ENCODE measurements at regions of chr17 and their contacts with region 1.

Region 1: GRCh38 chr17:8189711-8190477 is at the start of gene BORCS6:
- DNase-seq: peak; percentile 93 to 97 (median 95)
- H3K4me3 ChIP-seq: peak within 1 kb of the TSS; percentile 92
- H3K4me3 Mint-ChIP-seq: peak within 1 kb of the TSS in 1 of 7 donors; percentile 15
- H3K27ac ChIP-seq: peak within 1 kb of the TSS; percentile 81
- H3K27ac Mint-ChIP-seq: peak within 1 kb of the TSS; percentile 46 to 95 (median 88)
- H3K4me1 ChIP-seq: peaks cover 39% of the 10 kb centered on the region
- H3K4me1 Mint-ChIP-seq: peaks cover 12 to 13% (median 12%) of the 10 kb centered on the region in 3 donors
- H3K27me3 ChIP-seq: no peaks in the 10 kb centered on the region
- H3K27me3 Mint-ChIP-seq: peaks cover 0 to 2% of the 10 kb centered on the region in 2 donors
- total RNA-seq, gene BORCS6: 8.1 to 8.8 TPM

Region 2: GRCh38 chr17:8138672-8139371 is 51.1 kb before region 1 on chr17:
- CTCF ChIA-PET with region 1: interaction called, 25 read pairs
- POLR2A ChIA-PET with region 1: interaction called, 7 read pairs
- DNase-seq: peak; percentile 92 to 97 (median 95)
- H3K4me3 ChIP-seq: peak overlapping the region; percentile 97
- H3K4me3 Mint-ChIP-seq: no peak overlapping the region
- H3K27ac ChIP-seq: peak overlapping the region; percentile 94
- H3K27ac Mint-ChIP-seq: no peak overlapping the region
- H3K4me1 ChIP-seq: peaks cover 22% of the 10 kb centered on the region
- H3K4me1 Mint-ChIP-seq: peaks cover 0 to 2% (median 0%) of the 10 kb centered on the region in 3 donors
- H3K27me3 ChIP-seq: no peaks in the 10 kb centered on the region
- H3K27me3 Mint-ChIP-seq: peaks cover 0 to 5% of the 10 kb centered on the region in 2 donors

Region 3: DNA sequence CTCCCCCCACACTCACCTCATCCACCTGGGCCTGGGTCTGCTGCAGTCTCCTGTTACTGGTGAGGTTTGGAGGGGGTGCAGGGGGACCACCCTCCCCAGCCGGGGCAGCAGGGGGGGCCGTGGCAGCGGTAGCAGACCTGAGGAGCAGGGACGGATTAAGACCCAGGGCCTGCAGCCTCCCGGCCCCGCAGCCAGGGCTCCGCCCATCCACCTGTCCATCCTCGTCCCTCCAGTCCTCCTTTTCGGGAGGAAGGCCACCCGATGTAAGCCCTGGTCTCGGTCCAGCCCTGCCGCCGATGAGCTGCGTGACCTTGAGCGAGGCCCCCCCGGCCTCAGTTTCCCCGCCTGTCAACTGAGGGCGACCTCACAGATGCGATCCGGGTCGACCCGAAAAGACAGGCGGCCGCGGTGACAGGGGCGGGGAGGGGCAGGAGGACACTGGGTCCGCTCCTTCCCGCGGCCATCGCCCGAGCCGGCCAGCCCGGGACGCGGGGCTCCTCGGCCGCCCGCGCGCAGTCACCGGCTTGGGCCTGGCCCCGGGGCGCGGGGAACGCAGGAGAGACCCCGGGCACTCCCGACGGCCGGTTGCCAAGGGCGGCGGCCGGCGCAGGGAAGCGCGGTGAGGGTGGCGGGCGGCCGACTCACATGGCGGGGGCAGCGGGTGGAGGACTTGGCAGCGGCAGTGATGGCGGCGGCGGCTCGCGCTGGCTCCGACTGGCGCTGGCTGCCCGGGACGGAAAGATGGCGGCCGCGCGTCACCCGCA is 27.5 kb before region 1 on chr17 and contains the start of gene VAMP2:
- CTCF ChIA-PET with region 1: interaction called, 52 read pairs
- POLR2A ChIA-PET with region 1: interaction called, 40 read pairs
- DNase-seq: peak; percentile 81 to 90 (median 86)
- H3K4me3 ChIP-seq: peak within 1 kb of the TSS; percentile 96
- H3K4me3 Mint-ChIP-seq: peak within 1 kb of the TSS; percentile 87 to 95 (median 93)
- H3K27ac ChIP-seq: peak within 1 kb of the TSS; percentile 98
- H3K27ac Mint-ChIP-seq: peak within 1 kb of the TSS; percentile 94 to 100 (median 98)
- H3K4me1 ChIP-seq: peaks cover 60% of the 10 kb centered on the region
- H3K4me1 Mint-ChIP-seq: peaks cover 54 to 66% (median 58%) of the 10 kb centered on the region in 3 donors
- H3K27me3 ChIP-seq: no peaks in the 10 kb centered on the region
- H3K27me3 Mint-ChIP-seq: peaks cover 0 to 3% of the 10 kb centered on the region in 2 donors
- total RNA-seq, gene VAMP2: 38.3 to 41.0 TPM

Region 4: GRCh38 chr17:8204761-8205555 is 15.1 kb after region 1 on chr17:
- CTCF ChIA-PET with region 1: interaction called, 14 read pairs
- POLR2A ChIA-PET with region 1: interaction called, 13 read pairs
- DNase-seq: no peak
- H3K4me3 ChIP-seq: no peak overlapping the region
- H3K4me3 Mint-ChIP-seq: peak overlapping the region in 1 of 7 donors; percentile 59
- H3K27ac ChIP-seq: no peak overlapping the region
- H3K27ac Mint-ChIP-seq: peak overlapping the region in 2 of 8 donors; percentile 23 to 87
- H3K4me1 ChIP-seq: peaks cover 2% of the 10 kb centered on the region
- H3K4me1 Mint-ChIP-seq: peaks cover 6 to 8% (median 7%) of the 10 kb centered on the region in 3 donors
- H3K27me3 ChIP-seq: no peaks in the 10 kb centered on the region
- H3K27me3 Mint-ChIP-seq: peaks cover 0 to 2% of the 10 kb centered on the region in 2 donors

Region 5: GRCh38 chr17:8222630-8223356 is 32.9 kb after region 1 on chr17:
- CTCF ChIA-PET with region 1: interaction called, 63 read pairs
- POLR2A ChIA-PET with region 1: interaction called, 120 read pairs
- DNase-seq: peak; percentile 80 to 92 (median 87)
- H3K4me3 ChIP-seq: peak overlapping the region; percentile 98
- H3K4me3 Mint-ChIP-seq: peak overlapping the region; percentile 86 to 98 (median 97)
- H3K27ac ChIP-seq: peak overlapping the region; percentile 86
- H3K27ac Mint-ChIP-seq: peak overlapping the region; percentile 94 to 100 (median 96)
- H3K4me1 ChIP-seq: peaks cover 41% of the 10 kb centered on the region
- H3K4me1 Mint-ChIP-seq: peaks cover 64 to 83% (median 79%) of the 10 kb centered on the region in 3 donors
- H3K27me3 ChIP-seq: no peaks in the 10 kb centered on the region
- H3K27me3 Mint-ChIP-seq: peaks cover 0 to 31% of the 10 kb centered on the region in 2 donors

Region 6: GRCh38 chr17:8294814-8295316 is 105.0 kb after region 1 on chr17:
- CTCF ChIA-PET with region 1: interaction called, 11 read pairs
- POLR2A ChIA-PET with region 1: interaction called, 11 read pairs
- DNase-seq: no peak
- H3K4me3 ChIP-seq: peak overlapping the region; percentile 87
- H3K4me3 Mint-ChIP-seq: peak overlapping the region; percentile 89 to 96 (median 92)
- H3K27ac ChIP-seq: peak overlapping the region; percentile 81
- H3K27ac Mint-ChIP-seq: peak overlapping the region; percentile 86 to 99 (median 95)
- H3K4me1 ChIP-seq: peaks cover 17% of the 10 kb centered on the region
- H3K4me1 Mint-ChIP-seq: peaks cover 31 to 44% (median 31%) of the 10 kb centered on the region in 3 donors
- H3K27me3 ChIP-seq: no peaks in the 10 kb centered on the region
- H3K27me3 Mint-ChIP-seq: peaks cover 0 to 5% of the 10 kb centered on the region in 2 donors

Measured in CD8-positive, alpha-beta memory T cell (primary cell).